ENCODE measurements at regions of chr17 and their contacts with region 1.

Region 1: GRCh38 chr17:64281962-64282727 is 19.1 kb upstream of the TEX2 start:
- DNase-seq: peak; percentile 69
- ATAC-seq: peak; percentile 55
- H3K4me3 Mint-ChIP-seq: no peak overlapping the region
- H3K27ac Mint-ChIP-seq: no peak overlapping the region
- H3K4me1 Mint-ChIP-seq: peaks cover 6% of the 10 kb centered on the region
- H3K27me3 Mint-ChIP-seq: no peaks in the 10 kb centered on the region

Region 2: GRCh38 chr17:64174686-64175456 is 107.3 kb before region 1 on chr17:
- CTCF ChIA-PET with region 1: no interaction called
- POLR2A ChIA-PET with region 1: no interaction called
- DNase-seq: no peak
- ATAC-seq: no peak
- H3K4me3 Mint-ChIP-seq: no peak overlapping the region
- H3K27ac Mint-ChIP-seq: no peak overlapping the region
- H3K4me1 Mint-ChIP-seq: no peaks in the 10 kb centered on the region
- H3K27me3 Mint-ChIP-seq: no peaks in the 10 kb centered on the region

Region 3: GRCh38 chr17:64270885-64271284 is 11.3 kb before region 1 on chr17:
- CTCF ChIA-PET with region 1: interaction called, 11 read pairs
- POLR2A ChIA-PET with region 1: no interaction called
- DNase-seq: no peak
- ATAC-seq: peak; percentile 47
- H3K4me3 Mint-ChIP-seq: peak overlapping the region; percentile 19
- H3K27ac Mint-ChIP-seq: peak overlapping the region; percentile 75
- H3K4me1 Mint-ChIP-seq: peaks cover 27% of the 10 kb centered on the region
- H3K27me3 Mint-ChIP-seq: peaks cover 14% of the 10 kb centered on the region

Region 4: DNA sequence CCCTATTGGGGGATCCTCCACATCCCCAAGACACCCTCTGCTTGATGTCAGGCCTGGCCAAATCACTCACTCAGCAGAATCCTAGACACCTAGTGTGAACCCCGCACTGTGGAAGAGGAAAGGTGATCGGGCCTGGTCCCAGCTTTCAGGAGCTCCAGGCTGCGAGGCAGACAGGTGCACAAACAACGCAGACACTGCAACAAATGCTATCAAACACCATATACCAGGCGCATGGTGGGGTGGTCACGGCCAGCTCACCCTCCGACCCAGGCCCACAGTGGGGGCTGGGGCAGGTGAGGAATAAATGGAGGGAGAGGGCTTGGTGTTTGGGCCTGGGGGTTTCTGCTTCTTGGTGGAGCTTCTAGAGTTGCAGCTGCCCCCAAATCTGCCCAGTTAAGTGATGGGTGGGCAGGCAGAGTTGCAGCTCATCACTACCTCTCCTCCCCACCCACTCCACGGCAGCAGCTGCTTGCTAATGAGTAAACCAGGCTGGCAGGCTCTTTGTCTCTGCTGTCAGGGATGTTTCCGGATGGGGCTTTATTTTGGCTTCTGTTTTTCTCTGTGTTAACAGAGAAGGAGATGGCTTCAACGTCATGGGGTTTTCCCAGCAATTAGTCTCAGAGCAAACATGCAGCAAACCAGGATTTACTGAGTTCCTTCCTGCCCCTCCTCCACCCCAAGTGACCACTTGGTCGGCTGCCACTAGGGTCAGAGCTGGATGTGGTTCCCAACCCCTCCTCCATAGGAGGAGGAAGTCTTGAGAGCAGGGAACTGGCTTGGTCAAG is 61.9 kb after region 1 on chr17:
- CTCF ChIA-PET with region 1: no interaction called
- POLR2A ChIA-PET with region 1: no interaction called
- DNase-seq: no peak
- ATAC-seq: no peak
- H3K4me3 Mint-ChIP-seq: no peak overlapping the region
- H3K27ac Mint-ChIP-seq: peak overlapping the region; percentile 52
- H3K4me1 Mint-ChIP-seq: peaks cover 20% of the 10 kb centered on the region
- H3K27me3 Mint-ChIP-seq: no peaks in the 10 kb centered on the region